SK-N-SH (cell line): ENCODE measurements at regions of chr4 and their contacts with region 1.

Region 1: DNA sequence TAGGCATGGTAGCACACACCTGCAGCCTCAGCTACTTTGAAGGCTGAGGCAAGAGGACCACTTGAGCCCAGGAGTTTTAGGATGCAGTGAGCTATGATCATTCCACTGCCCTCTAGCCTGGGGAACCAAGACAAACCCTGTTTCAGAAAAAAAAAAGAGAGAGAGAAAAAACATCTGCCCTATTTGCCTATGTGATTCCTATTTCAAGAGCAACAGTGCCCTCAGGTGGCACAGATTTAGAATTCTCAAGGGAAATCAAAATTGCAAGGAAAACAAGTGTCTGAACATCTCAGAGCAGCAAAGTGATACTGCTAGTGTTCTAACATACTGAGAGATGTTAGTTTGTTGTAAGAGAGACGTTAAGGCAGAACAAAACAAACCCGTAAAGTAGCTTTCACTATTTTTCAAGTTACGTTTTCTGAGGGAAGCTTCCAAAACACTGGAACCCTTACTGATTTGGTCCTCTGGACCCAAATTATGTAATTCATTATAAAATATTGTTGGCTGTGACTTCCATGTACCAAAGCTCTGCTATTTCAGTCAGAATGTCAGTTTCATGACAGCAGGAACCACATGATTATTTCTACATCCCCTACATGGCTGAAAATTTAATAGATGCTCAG is 7.9 kb downstream of the BDH2 start:
- DNase-seq: peak; percentile 39
- H3K4me3 ChIP-seq: no peak overlapping the region; a peak in 1 of 4 replicates
- H3K27ac ChIP-seq: peak overlapping the region in 1 of 2 experiments; percentile 30; a peak in 1 of 4 replicates
- H3K4me1 ChIP-seq: no peaks in the 10 kb centered on the region
- H3K27me3 ChIP-seq: no peaks in the 10 kb centered on the region
- CTCF ChIP-seq: peak; percentile 76
- EP300 ChIP-seq: no peak
- RAD21 ChIP-seq: peak; percentile 93

Region 2: DNA sequence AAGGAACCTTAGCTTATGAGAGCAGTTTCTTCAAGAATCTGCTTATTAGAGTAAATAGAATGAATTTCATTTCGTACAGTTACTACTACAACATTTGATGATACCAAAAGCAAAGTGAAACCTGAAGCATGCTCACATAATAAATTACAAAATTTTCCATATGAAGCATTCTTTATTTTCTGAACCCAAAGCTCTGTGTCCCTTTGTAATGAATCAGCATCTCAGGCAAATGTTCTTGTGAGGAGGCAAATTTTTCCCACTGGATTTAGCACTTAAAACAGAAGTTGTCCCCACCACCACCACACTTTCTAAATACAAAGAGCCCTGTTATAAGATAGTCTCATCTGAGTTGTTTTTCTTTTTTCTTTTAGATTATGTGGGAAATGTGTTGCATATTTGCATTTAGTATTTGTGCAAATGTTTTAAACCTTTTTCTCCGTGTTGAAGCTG is 661.2 kb before region 1 on chr4:
- CTCF ChIA-PET with region 1: interaction called, 12 read pairs
- POLR2A ChIA-PET with region 1: no interaction called
- DNase-seq: no peak
- H3K4me3 ChIP-seq: peak overlapping the region; percentile 54 to 80
- H3K27ac ChIP-seq: peak overlapping the region; percentile 24 to 77; a peak in 3 of 4 replicates
- H3K4me1 ChIP-seq: peaks cover 0 to 10% of the 10 kb centered on the region in 2 experiments; a peak in 2 of 4 replicates
- H3K27me3 ChIP-seq: no peaks in the 10 kb centered on the region
- CTCF ChIP-seq: no peak
- EP300 ChIP-seq: no peak
- RAD21 ChIP-seq: no peak

Region 3: GRCh38 chr4:102620697-102621497 is 470.8 kb before region 1 on chr4:
- CTCF ChIA-PET with region 1: interaction called, 18 read pairs
- POLR2A ChIA-PET with region 1: no interaction called
- DNase-seq: peak; percentile 33
- H3K4me3 ChIP-seq: peak overlapping the region; percentile 26 to 37; a peak in 2 of 4 replicates
- H3K27ac ChIP-seq: peak overlapping the region; percentile 54 to 58; a peak in 3 of 4 replicates
- H3K4me1 ChIP-seq: peaks cover 0 to 8% of the 10 kb centered on the region in 2 experiments; a peak in 2 of 4 replicates
- H3K27me3 ChIP-seq: no peaks in the 10 kb centered on the region
- CTCF ChIP-seq: peak; percentile 70
- EP300 ChIP-seq: no peak
- RAD21 ChIP-seq: peak; percentile 75

Region 4: DNA sequence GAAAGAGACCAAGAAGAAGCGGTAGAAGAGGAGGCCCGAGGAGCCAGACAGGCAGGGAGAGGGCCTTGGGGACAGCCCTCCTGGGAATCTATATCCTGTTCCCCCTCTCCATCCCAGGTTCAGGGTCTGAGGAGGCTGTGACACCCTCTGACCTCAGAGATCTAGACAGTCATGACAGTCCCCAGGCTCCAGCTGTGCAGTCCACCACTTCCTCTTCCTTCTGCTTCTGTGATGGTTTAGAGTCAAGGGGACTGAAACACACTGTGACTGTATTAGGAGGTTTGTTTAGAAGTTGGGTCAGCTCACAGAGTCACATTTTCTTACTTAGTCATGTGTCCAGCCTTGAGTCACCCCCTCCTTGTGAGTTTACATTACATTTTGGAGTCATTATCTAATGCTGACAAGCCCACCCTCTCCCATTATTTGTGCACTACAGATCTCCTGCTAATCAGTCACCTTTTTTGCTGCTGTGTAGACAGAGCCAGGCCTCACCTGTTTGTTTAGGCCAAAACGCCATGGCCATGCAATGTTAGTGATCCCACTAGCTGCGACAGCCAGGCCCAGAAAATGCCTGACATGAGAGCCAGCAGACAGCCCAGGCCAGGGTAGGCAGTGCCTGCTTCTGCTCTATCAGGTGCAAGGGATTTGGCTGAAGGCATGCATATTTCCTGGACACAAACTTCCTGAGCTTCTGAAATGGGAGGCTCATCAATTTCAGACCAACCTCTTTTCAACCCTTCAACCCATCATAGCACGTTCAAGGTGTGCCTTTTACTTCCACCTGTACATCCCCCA is 356.9 kb before region 1 on chr4:
- CTCF ChIA-PET with region 1: no interaction called
- POLR2A ChIA-PET with region 1: no interaction called
- DNase-seq: no peak
- H3K4me3 ChIP-seq: no peak overlapping the region
- H3K27ac ChIP-seq: no peak overlapping the region; a peak in 1 of 4 replicates
- H3K4me1 ChIP-seq: no peaks in the 10 kb centered on the region
- H3K27me3 ChIP-seq: no peaks in the 10 kb centered on the region
- CTCF ChIP-seq: no peak
- EP300 ChIP-seq: no peak
- RAD21 ChIP-seq: no peak

Region 5: GRCh38 chr4:103046416-103047290 is 45.1 kb before region 1 on chr4:
- CTCF ChIA-PET with region 1: interaction called, 13 read pairs
- POLR2A ChIA-PET with region 1: no interaction called
- DNase-seq: peak; percentile 34
- H3K4me3 ChIP-seq: no peak overlapping the region; a peak in 1 of 4 replicates
- H3K27ac ChIP-seq: no peak overlapping the region
- H3K4me1 ChIP-seq: no peaks in the 10 kb centered on the region
- H3K27me3 ChIP-seq: no peaks in the 10 kb centered on the region
- CTCF ChIP-seq: peak; percentile 71
- EP300 ChIP-seq: no peak
- RAD21 ChIP-seq: peak; percentile 55

Region 6: GRCh38 chr4:103075901-103076739 is 15.6 kb before region 1 on chr4:
- CTCF ChIA-PET with region 1: interaction called, 12 read pairs
- POLR2A ChIA-PET with region 1: interaction called, 4 read pairs
- DNase-seq: peak; percentile 80
- H3K4me3 ChIP-seq: peak overlapping the region; percentile 76 to 86
- H3K27ac ChIP-seq: peak overlapping the region; percentile 69 to 86
- H3K4me1 ChIP-seq: peaks cover 0 to 7% of the 10 kb centered on the region in 2 experiments; a peak in 2 of 4 replicates
- H3K27me3 ChIP-seq: no peaks in the 10 kb centered on the region
- CTCF ChIP-seq: 0 out of 2 replicates have a peak, but pooled peaks have one; percentile 9
- EP300 ChIP-seq: no peak
- RAD21 ChIP-seq: no peak

Region 7: GRCh38 chr4:104294811-104295210 is 1203.1 kb after region 1 on chr4:
- CTCF ChIA-PET with region 1: no interaction called
- POLR2A ChIA-PET with region 1: no interaction called
- DNase-seq: no peak
- H3K4me3 ChIP-seq: no peak overlapping the region
- H3K27ac ChIP-seq: no peak overlapping the region
- H3K4me1 ChIP-seq: no peaks in the 10 kb centered on the region
- H3K27me3 ChIP-seq: no peaks in the 10 kb centered on the region
- CTCF ChIP-seq: no peak
- EP300 ChIP-seq: no peak
- RAD21 ChIP-seq: no peak